GM10248 (cell line): ENCODE measurements at regions of chr1 and their contacts with region 1.

Region 1: DNA sequence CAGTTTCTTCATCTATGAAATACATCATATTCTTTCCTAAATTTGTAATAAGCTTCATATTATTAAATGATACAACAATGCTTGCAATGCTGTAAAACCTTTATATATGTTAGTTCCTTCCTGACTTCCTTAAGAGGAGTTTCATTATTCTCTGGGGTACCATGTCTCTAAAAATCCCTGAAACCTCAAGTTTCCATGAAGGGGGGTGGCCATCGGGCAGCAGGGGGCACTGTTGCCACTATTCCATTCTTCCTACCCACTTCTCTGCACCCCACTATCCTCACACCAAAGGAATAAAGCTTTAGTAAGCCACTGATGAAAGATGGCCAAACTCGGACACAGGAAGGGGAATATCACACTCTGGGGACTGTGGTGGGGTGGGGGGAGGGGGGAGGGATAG is 9.0 kb upstream of the DMRTB1 start:
- DNase-seq: no peak
- CTCF ChIP-seq: no peak

Region 2: DNA sequence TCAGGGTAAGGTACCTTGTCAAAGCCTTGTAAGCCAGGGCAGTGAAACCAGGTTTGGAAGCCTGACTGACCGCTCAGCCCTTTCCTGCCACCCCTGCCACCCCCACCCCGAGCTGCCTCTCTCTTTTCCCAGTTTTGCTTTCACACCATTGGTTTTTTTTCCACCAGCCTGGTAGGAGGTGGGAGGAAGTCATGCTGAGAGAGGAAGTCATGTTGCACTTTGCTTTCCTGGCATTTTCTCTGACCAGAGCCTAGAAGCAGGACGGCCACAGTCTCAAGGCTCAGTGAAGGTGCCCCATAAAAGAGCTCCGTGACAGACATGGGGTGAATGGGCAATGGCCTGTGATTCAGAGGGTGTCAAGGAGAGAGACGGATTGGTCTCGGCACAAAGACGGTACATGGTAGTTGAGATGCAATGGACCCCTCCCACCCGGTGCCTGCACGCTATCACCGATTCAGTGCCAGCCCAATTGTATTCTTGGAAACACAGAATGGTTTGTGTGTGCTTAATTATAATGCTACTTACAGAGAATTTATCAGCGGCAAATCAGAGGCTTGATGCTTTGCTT is 33.1 kb before region 1 on chr1:
- CTCF ChIA-PET with region 1: no interaction called
- POLR2A ChIA-PET with region 1: no interaction called
- DNase-seq: no peak
- CTCF ChIP-seq: no peak

Region 3: DNA sequence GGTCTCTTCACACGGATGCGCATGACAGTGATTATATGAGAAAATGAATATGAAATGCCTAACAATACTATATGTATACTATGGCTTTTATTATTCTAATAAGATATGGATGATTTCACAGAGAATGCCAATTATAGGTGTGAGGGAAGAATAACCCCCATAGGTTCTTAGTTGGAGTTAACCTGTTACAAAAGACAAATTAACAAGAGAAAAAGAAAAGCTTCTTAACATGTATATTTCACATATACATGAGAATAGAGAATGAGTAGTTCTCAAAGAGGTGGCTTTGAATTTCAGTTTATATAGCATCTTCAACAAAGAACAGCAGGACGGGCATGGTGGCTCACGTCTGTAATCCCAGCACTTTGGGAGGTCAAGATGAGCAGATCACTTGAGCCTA is 15.1 kb before region 1 on chr1:
- CTCF ChIA-PET with region 1: interaction called, 11 read pairs
- POLR2A ChIA-PET with region 1: no interaction called
- DNase-seq: no peak
- CTCF ChIP-seq: no peak

Region 4: DNA sequence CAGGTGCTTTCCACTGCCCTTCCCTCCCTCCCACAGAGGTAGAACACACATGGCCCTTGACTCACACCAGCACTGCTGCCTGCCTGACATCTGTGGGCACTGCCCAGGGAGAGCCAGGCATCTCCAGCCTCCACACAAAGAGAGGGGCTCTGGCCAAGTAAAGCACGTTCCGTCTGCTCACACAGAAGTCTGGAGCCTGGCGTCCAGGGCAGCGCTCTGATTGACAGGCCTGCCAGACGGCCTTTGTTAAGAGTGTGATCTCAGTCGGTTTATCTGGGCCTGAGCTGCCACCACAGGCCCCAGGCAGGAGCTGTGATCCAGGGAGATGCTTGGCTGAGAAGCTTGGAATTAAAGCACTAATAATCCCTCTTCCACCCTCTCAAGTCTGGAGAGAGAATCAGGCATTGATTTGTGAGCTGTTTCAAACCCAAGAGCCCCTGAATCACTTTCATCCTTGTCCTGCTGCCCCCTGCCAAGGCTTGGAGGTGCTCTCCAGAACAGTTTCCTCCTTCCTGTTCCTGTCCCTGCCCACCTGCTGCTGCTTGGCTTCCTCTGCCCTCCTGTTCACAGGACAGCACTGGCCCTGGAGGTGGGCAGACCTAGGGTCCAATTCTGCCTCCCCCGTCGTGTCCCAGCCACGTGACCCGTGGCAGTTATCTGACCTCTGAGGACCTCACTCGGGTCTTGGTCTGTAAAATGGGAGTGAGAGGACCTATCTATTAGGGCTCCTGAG is 12.7 kb after region 1 on chr1:
- CTCF ChIA-PET with region 1: interaction called, 17 read pairs
- POLR2A ChIA-PET with region 1: no interaction called
- DNase-seq: peak; percentile 7
- CTCF ChIP-seq: no peak